ENCODE measurements at regions of chr22 and their contacts with region 1.

Region 1: GRCh38 chr22:36913427-36914389 is at the start of gene CSF2RB:
- DNase-seq: peak; percentile 86
- ATAC-seq: peak; percentile 92 to 95
- H3K4me3 ChIP-seq: peak within 1 kb of the TSS; percentile 53
- H3K27ac ChIP-seq: peak within 1 kb of the TSS; percentile 77
- H3K4me1 ChIP-seq: peaks cover 16% of the 10 kb centered on the region
- H3K27me3 ChIP-seq: no peaks in the 10 kb centered on the region
- CTCF ChIP-seq: no peak
- total RNA-seq, gene CSF2RB: 30.1 TPM

Region 2: GRCh38 chr22:36856121-36856791 is 57.5 kb before region 1 on chr22:
- intact Hi-C with region 1: loop called (anchors 10 kb)
- DNase-seq: peak; percentile 95
- ATAC-seq: peak; percentile 82 to 94
- H3K4me3 ChIP-seq: no peak overlapping the region
- H3K27ac ChIP-seq: no peak overlapping the region
- H3K4me1 ChIP-seq: no peaks in the 10 kb centered on the region
- H3K27me3 ChIP-seq: no peaks in the 10 kb centered on the region
- CTCF ChIP-seq: peak; percentile 100

Region 3: GRCh38 chr22:37486224-37486845 is 572.6 kb after region 1 on chr22 and contains the start of gene MFNG:
- intact Hi-C with region 1: no loop called
- DNase-seq: peak; percentile 90
- ATAC-seq: peak; percentile 84 to 86
- H3K4me3 ChIP-seq: peak within 1 kb of the TSS; percentile 72
- H3K27ac ChIP-seq: peak within 1 kb of the TSS; percentile 90
- H3K4me1 ChIP-seq: peaks cover 38% of the 10 kb centered on the region
- H3K27me3 ChIP-seq: no peaks in the 10 kb centered on the region
- CTCF ChIP-seq: no peak
- total RNA-seq, gene MFNG: 71.0 TPM

Measured in lower lobe of right lung (tissue), 2 donors.